Transverse colon (tissue), 4 donors: ENCODE measurements at regions of chr4 and their contacts with region 1.

Region 1: GRCh38 chr4:169270810-169271691 is at the start of gene SH3RF1:
- DNase-seq: peak; percentile 88
- H3K4me3 ChIP-seq: peak within 1 kb of the TSS; percentile 73 to 96 (median 80)
- H3K27ac ChIP-seq: peak within 1 kb of the TSS; percentile 90 to 97 (median 94)
- H3K4me1 ChIP-seq: peaks cover 5 to 51% (median 24%) of the 10 kb centered on the region in 4 donors
- H3K27me3 ChIP-seq: no peaks in the 10 kb centered on the region
- CTCF ChIP-seq: peak in 2 of 5 experiments; percentile 15 to 24
- EP300 ChIP-seq: no peak
- POLR2A ChIP-seq: peak; percentile 91
- total RNA-seq, gene SH3RF1: 49.0 to 63.4 (median 54.3) TPM

Region 2: DNA sequence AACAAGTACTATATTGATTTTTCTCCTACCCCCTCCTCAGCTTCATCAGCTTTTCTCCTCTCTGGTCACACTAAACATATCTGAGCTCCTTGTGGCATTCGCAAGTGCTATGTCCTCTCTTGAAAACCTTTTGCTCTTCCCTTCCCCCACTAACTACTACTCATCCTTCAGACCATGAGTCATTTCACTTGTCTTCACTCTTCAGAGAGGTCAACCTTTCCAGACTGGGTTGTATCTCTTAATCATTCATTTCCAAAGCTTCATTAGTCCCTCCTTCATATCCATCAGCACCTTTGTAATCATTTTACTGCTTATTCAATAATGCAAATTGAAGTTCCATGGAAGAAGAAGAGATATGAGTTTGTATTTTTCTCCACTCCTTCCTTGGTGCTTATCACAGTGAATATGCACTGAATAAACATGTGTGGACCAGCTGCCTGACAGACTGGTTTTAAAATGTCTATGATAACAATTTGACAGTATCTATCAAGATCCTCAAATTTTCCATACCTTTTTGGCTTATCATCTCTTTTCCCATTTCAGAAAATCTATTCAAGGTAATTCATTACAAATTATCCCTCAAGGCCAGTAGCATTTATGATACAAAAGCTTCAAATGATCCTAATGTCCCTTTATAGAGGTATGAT is 819.2 kb before region 1 on chr4:
- in situ Hi-C with region 1: no loop called
- intact Hi-C with region 1: no loop called
- DNase-seq: no peak
- H3K4me3 ChIP-seq: no peak overlapping the region
- H3K27ac ChIP-seq: no peak overlapping the region
- H3K4me1 ChIP-seq: no peaks in the 10 kb centered on the region
- H3K27me3 ChIP-seq: no peaks in the 10 kb centered on the region
- CTCF ChIP-seq: no peak
- EP300 ChIP-seq: no peak
- POLR2A ChIP-seq: no peak

Region 3: GRCh38 chr4:168765726-168766125 is 505.3 kb before region 1 on chr4:
- in situ Hi-C with region 1: no loop called
- intact Hi-C with region 1: no loop called
- DNase-seq: peak; percentile 69
- H3K4me3 ChIP-seq: no peak overlapping the region
- H3K27ac ChIP-seq: peak overlapping the region; percentile 72 to 80 (median 79)
- H3K4me1 ChIP-seq: peaks cover 0 to 58% (median 21%) of the 10 kb centered on the region in 4 donors
- H3K27me3 ChIP-seq: no peaks in the 10 kb centered on the region
- CTCF ChIP-seq: no peak
- EP300 ChIP-seq: no peak
- POLR2A ChIP-seq: no peak

Region 4: GRCh38 chr4:169492438-169493163 is 221.6 kb after region 1 on chr4:
- in situ Hi-C with region 1: no loop called
- intact Hi-C with region 1: loop called (anchors 10 kb)
- DNase-seq: peak; percentile 16
- H3K4me3 ChIP-seq: no peak overlapping the region
- H3K27ac ChIP-seq: no peak overlapping the region
- H3K4me1 ChIP-seq: no peaks in the 10 kb centered on the region
- H3K27me3 ChIP-seq: no peaks in the 10 kb centered on the region
- CTCF ChIP-seq: peak; percentile 54 to 75 (median 69)
- EP300 ChIP-seq: no peak
- POLR2A ChIP-seq: no peak